H1 (cell line): ENCODE measurements at regions of chr15 and their contacts with region 1.

Region 1: GRCh38 chr15:84955089-84955848 is 26.4 kb upstream of the PDE8A start:
- DNase-seq: peak in 1 of 2 experiments; percentile 70
- H3K4me3 ChIP-seq: no peak overlapping the region
- H3K27ac ChIP-seq: no peak overlapping the region
- H3K4me1 ChIP-seq: peaks cover 0 to 9% (median 1%) of the 10 kb centered on the region in 4 experiments; a peak in 4 of 7 replicates
- H3K27me3 ChIP-seq: no peaks in the 10 kb centered on the region
- CTCF ChIP-seq: peak; percentile 80 to 87 (median 81)
- EP300 ChIP-seq: no peak
- POLR2A ChIP-seq: no peak
- RAD21 ChIP-seq: peak; percentile 83 to 86

Region 2: GRCh38 chr15:84797212-84797611 is 158.1 kb before region 1 on chr15:
- CTCF ChIA-PET with region 1: no interaction called
- POLR2A ChIA-PET with region 1: no interaction called
- DNase-seq: no peak
- H3K4me3 ChIP-seq: no peak overlapping the region
- H3K27ac ChIP-seq: no peak overlapping the region
- H3K4me1 ChIP-seq: no peaks in the 10 kb centered on the region
- H3K27me3 ChIP-seq: no peaks in the 10 kb centered on the region
- CTCF ChIP-seq: no peak
- EP300 ChIP-seq: no peak
- POLR2A ChIP-seq: no peak
- RAD21 ChIP-seq: no peak

Region 3: DNA sequence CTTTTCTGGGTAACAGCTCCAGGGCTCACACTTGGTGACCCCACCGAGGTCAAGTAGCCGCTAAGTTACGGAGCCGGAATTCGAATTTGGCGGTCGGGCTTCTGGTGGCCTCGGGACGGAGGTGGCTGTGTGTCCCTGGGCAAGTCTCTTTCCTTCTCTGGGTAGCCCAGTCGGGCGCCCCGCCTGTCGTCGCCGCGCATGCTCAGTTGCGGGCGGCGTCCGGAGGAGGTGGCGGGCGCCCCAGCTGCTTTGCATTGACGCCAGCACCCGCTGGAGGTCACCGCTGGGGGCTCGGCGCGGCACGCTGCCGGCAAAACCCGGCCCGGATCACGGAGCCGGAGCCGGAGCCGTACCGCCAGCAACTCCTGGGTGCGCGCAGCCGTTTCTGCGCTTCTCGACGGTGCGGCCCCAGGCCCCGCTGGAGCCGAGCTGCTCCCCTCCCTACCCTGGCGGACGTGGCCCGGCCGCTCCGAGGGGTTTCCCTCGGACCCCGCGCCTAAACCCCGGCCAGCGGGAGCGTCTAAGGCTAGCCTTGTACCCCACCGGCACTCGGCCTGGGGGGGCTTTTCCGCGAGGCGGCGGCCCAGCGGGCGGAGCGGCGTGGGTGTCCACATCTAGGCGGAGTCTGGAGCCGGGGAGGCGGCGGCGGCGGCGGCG is 25.9 kb after region 1 on chr15:
- CTCF ChIA-PET with region 1: interaction called, 11 read pairs
- POLR2A ChIA-PET with region 1: no interaction called
- DNase-seq: peak; percentile 91 to 96
- H3K4me3 ChIP-seq: peak overlapping the region; percentile 55 to 86 (median 74)
- H3K27ac ChIP-seq: no peak overlapping the region
- H3K4me1 ChIP-seq: peaks cover 0 to 5% (median 2%) of the 10 kb centered on the region in 4 experiments; a peak in 4 of 7 replicates
- H3K27me3 ChIP-seq: peaks cover 5 to 43% (median 30%) of the 10 kb centered on the region in 4 experiments
- CTCF ChIP-seq: no peak
- EP300 ChIP-seq: peak in 1 of 2 experiments; percentile 90; a peak in 1 of 3 replicates
- POLR2A ChIP-seq: no peak
- RAD21 ChIP-seq: peak in 1 of 2 experiments; percentile 26; a peak in 2 of 4 replicates

Region 4: GRCh38 chr15:85010386-85011159 is 55.3 kb after region 1 on chr15:
- CTCF ChIA-PET with region 1: interaction called, 12 read pairs
- POLR2A ChIA-PET with region 1: no interaction called
- DNase-seq: no peak
- H3K4me3 ChIP-seq: no peak overlapping the region
- H3K27ac ChIP-seq: no peak overlapping the region
- H3K4me1 ChIP-seq: no peaks in the 10 kb centered on the region
- H3K27me3 ChIP-seq: no peaks in the 10 kb centered on the region
- CTCF ChIP-seq: peak in 2 of 3 experiments; percentile 11 to 36; a peak in 2 of 4 replicates
- EP300 ChIP-seq: no peak
- POLR2A ChIP-seq: no peak
- RAD21 ChIP-seq: peak; percentile 48 to 51; a peak in 3 of 4 replicates

Region 5: DNA sequence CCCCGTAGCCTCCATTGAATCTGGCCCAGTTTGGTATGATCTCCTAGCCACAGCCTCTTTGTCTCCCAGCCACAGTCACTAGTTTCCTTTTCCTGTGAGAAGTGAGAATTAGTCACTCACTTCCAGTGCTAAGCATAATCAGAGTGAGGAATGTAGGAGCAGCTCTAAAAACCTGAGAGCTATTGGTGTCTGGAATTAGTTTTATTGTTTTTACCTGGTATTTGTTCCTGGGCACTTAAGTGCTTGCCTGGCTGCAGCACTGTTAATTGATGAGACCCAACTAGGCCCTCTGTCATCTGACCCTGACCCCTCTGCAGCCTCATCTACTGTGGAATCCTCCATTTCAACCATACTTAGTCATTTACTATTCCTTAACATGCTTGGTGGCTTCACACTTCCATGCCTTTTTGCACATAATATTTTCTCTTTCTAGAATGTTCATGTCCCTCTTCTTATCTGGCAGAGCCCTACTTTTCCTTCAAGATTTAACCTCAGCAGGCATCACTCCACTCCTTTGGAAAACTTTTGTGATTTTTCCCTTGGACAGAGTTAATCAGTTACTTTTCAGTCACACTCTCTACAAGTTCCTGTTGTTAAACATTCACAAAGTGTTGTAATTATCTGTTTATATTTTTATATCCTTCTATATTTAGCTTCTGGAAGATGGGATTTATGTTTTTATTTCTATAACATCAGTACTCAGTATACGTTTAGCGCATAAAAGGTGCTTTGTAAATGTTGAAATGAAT is 75.2 kb after region 1 on chr15:
- CTCF ChIA-PET with region 1: interaction called, 10 read pairs
- POLR2A ChIA-PET with region 1: no interaction called
- DNase-seq: no peak
- H3K4me3 ChIP-seq: no peak overlapping the region
- H3K27ac ChIP-seq: no peak overlapping the region
- H3K4me1 ChIP-seq: peaks cover 0 to 13% (median 6%) of the 10 kb centered on the region in 4 experiments; a peak in 5 of 7 replicates
- H3K27me3 ChIP-seq: no peaks in the 10 kb centered on the region
- CTCF ChIP-seq: no peak
- EP300 ChIP-seq: no peak
- POLR2A ChIP-seq: no peak
- RAD21 ChIP-seq: no peak

Region 6: DNA sequence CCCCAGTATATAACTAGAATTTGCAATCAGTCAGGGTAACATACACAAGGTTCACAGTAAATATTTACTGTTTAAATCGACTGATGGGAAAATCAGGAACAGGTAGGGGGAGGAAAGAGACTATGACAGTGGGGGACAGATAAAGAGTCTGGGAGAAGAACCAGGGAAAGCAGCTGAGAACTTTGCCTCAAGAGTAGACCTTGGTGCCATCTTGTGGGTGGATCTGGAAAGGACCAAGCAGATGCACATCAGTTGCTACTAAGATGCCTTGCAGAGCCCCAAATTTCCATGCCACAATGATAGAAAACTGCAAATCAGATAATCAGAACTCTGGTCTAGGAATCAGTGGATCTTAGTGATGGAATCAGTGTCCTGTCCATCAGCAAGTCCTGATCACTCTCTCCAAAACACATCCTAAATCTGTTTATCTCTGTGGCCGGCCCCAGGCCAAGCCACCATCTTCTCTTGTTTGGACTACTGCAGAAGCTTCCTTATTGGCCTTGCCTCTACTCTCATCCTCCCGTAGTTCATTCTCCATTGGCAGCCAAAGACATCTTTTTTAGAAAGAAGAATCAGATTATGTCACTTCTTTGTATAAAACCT is 89.1 kb after region 1 on chr15:
- CTCF ChIA-PET with region 1: interaction called, 27 read pairs
- POLR2A ChIA-PET with region 1: no interaction called
- DNase-seq: no peak
- H3K4me3 ChIP-seq: no peak overlapping the region
- H3K27ac ChIP-seq: no peak overlapping the region
- H3K4me1 ChIP-seq: no peaks in the 10 kb centered on the region
- H3K27me3 ChIP-seq: no peaks in the 10 kb centered on the region
- CTCF ChIP-seq: peak; percentile 25 to 69 (median 68)
- EP300 ChIP-seq: no peak
- POLR2A ChIP-seq: no peak
- RAD21 ChIP-seq: peak; percentile 83 to 85